Naive thymus-derived CD8-positive, alpha-beta T cell (primary cell): ENCODE measurements at regions of chr19 and their contacts with region 1.

Region 1: DNA sequence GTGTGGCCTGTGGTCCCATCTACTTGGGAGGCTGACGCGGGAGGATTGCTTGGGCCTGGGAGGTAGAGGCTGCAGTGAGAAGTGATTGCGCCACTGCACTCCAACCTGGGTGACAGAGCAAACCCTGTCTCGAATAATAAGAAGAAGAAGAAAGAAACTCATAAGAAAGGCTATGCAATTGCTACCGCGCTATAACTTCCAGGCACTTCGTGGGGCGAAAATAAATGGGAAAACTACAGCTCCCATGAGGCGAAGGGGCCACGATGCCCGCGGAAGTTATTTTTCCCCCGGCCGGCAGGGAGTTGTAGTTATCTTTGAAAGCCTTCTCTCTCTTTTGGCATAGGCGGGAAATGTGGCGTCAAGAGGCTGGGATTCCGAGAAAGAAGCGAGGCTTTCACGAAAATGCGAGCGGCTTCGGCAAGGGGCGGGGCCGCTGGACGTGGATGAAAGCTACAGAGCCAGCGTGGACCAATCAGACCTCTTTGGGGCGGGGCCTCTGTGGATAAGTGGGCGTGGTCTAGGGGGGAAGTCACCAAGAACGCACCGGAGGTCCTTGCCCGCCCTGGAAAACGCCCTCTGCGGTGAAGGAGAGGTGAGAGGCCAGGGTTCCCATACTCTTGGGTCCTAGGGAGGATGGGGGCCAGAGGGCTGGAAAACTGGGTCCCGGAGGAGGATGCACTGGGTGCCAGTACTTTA is at the start of gene NUCB1:
- DNase-seq: peak; percentile 94 to 99 (median 98)
- ATAC-seq: peak; percentile 92 to 94
- H3K4me3 Mint-ChIP-seq: peak within 1 kb of the TSS; percentile 92 to 99 (median 97)
- H3K27ac Mint-ChIP-seq: peak within 1 kb of the TSS; percentile 89 to 98 (median 96)
- H3K4me1 Mint-ChIP-seq: peaks cover 13 to 49% (median 42%) of the 10 kb centered on the region in 4 donors
- H3K27me3 Mint-ChIP-seq: peaks cover 0 to 6% (median 3%) of the 10 kb centered on the region in 5 donors
- polyA plus RNA-seq, gene NUCB1: 48.6 to 119 (median 82.5) TPM

Region 2: GRCh38 chr19:48872182-48872883 is 27.6 kb before region 1 on chr19 and contains the start of gene PPP1R15A:
- POLR2A ChIA-PET with region 1: interaction called, 10 read pairs
- DNase-seq: peak; percentile 88 to 100 (median 98)
- ATAC-seq: peak; percentile 35 to 42
- H3K4me3 Mint-ChIP-seq: peak within 1 kb of the TSS; percentile 95 to 100 (median 98)
- H3K27ac Mint-ChIP-seq: peak within 1 kb of the TSS; percentile 94 to 100 (median 100)
- H3K4me1 Mint-ChIP-seq: peaks cover 29 to 45% (median 41%) of the 10 kb centered on the region in 4 donors
- H3K27me3 Mint-ChIP-seq: peaks cover 0 to 5% (median 0%) of the 10 kb centered on the region in 5 donors
- polyA plus RNA-seq, gene PPP1R15A: 17.2 to 47.3 (median 43.1) TPM